HAP-1 (cell line): ENCODE measurements at regions of chr14 and their contacts with region 1.

Region 1: GRCh38 chr14:100900837-100901390 is 2.6 kb downstream of the RTL1 start:
- DNase-seq: peak; percentile 52 to 90
- H3K4me3 ChIP-seq: no peak overlapping the region
- H3K4me1 ChIP-seq: peaks cover 31% of the 10 kb centered on the region
- H3K27me3 ChIP-seq: peaks cover 10% of the 10 kb centered on the region

Region 2: DNA sequence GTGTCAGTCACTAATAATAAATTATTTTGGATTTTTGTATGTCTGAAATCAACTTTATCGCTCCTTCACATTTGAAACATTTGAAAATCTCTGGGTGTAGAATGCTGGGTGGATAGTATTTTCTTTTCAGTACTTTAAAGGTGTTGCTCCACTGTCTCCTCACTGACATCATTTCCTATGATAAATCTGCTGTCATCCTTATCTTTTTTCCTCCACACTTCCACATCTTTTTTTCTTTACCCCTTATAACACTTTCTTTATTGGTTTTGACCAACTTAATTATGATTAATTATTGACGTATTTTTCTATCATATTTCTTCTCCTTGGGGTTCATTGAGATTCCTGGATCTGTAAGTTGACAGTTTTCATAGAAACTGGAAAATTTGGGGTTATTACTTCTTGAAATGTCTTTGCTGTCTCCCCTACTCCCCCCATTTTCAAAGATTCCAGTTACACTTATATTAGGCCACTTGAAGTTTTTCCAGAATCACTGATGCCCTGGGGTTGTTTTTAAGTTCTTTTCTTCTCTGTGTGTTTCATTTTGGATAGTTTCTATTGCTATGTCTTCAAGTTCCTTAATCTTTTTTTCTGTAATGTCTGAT is 482.9 kb after region 1 on chr14:
- in situ Hi-C with region 1: no loop called
- DNase-seq: no peak
- H3K4me3 ChIP-seq: no peak overlapping the region
- H3K4me1 ChIP-seq: no peaks in the 10 kb centered on the region
- H3K27me3 ChIP-seq: no peaks in the 10 kb centered on the region

Region 3: GRCh38 chr14:101628471-101628966 is 727.6 kb after region 1 on chr14:
- in situ Hi-C with region 1: loop called (anchors 10 kb)
- DNase-seq: peak; percentile 57 to 85
- H3K4me3 ChIP-seq: no peak overlapping the region
- H3K4me1 ChIP-seq: peaks cover 3% of the 10 kb centered on the region; the same call in 1 of the 2 replicates
- H3K27me3 ChIP-seq: no peaks in the 10 kb centered on the region